ENCODE measurements at regions of chr11 and their contacts with region 1.

Region 1: GRCh38 chr11:59158206-59159068 is 13.5 kb upstream of the DTX4 start:
- DNase-seq: peak; percentile 87
- H3K4me3 ChIP-seq: no peak overlapping the region
- H3K27ac ChIP-seq: no peak overlapping the region
- H3K4me1 ChIP-seq: no peaks in the 10 kb centered on the region
- H3K27me3 ChIP-seq: no peaks in the 10 kb centered on the region
- CTCF ChIP-seq: peak; percentile 94

Region 2: GRCh38 chr11:58905721-58906477 is 252.5 kb before region 1 on chr11:
- CTCF ChIA-PET with region 1: interaction called, 4 read pairs
- POLR2A ChIA-PET with region 1: no interaction called
- intact Hi-C with region 1: loop called (anchors 5 kb)
- DNase-seq: peak; percentile 87
- H3K4me3 ChIP-seq: peak overlapping the region; percentile 44
- H3K27ac ChIP-seq: no peak overlapping the region
- H3K4me1 ChIP-seq: no peaks in the 10 kb centered on the region
- H3K27me3 ChIP-seq: peaks cover 45% of the 10 kb centered on the region
- CTCF ChIP-seq: peak; percentile 55

Region 3: DNA sequence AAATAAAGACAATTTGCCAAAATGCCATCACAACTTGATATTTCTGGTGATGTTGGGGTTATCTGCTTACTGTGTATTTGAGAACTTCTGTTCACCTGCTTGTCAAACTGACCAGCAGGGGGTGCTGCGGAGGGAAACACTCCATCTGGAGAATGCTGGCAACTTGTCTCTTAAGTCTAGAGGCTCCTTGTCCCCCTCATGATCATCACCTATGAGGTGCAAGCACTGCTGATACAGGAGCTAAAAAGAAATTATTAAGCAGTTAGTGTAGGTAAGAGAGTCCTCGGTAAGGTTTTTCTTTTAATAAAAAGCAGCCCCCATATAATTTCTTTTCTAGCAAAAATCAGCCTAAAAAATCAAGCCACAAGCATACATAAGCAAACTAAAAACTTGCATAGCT is 105.0 kb before region 1 on chr11:
- CTCF ChIA-PET with region 1: interaction called, 8 read pairs
- POLR2A ChIA-PET with region 1: no interaction called
- intact Hi-C with region 1: loop called (anchors 1 kb)
- DNase-seq: peak; percentile 77
- H3K4me3 ChIP-seq: no peak overlapping the region
- H3K27ac ChIP-seq: no peak overlapping the region
- H3K4me1 ChIP-seq: no peaks in the 10 kb centered on the region
- H3K27me3 ChIP-seq: peaks cover 23% of the 10 kb centered on the region
- CTCF ChIP-seq: peak; percentile 74

Region 4: DNA sequence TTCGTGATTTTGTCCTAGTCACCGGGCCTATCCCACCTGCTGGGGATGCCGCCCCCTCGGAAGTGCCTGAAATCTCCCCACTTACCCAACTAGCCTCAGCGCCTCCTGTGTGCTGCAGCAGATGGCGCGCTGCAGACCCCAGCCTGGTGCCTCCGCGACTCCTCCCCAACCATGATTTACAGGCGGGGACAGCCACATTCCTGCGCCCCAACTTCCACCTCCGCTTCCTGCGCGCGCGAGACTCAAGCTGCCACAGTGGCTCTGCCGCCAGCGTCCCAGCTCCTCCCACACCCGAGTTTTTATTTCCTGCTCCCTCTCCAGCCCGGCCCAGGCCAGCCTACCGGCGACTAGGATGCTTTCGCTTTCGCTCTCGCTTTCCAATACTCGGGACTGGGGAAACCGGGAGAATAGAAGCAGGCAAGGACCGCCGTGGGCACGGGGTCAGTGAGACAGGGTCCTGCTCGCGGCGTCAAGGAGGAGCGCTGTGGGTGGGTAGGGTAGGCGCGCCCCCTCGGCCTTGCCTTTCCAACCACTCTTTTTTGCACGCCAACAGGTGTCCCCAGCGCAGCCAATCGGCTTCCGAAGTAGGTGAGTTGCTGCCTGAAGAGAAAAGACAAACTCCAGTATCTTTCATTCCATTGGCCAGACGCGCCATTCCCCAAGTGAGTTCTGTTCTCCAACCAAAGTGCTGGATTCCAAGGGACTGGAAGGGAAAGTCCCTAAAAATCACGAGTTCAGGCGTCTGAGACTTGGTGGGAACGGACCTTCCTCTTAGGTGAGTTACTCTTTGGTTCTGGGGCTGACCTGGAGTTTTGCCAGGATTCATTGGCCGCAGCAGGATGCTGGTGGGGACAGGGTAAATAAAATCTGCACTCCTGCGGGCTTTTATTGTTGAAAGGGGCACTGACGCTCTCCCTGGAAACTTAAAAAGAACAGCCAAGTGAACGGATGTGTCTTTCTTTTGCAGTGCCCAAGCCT is 15.6 kb before region 1 on chr11 and contains the start of gene FAM111A:
- CTCF ChIA-PET with region 1: interaction called, 13 read pairs
- POLR2A ChIA-PET with region 1: no interaction called
- intact Hi-C with region 1: no loop called
- DNase-seq: peak; percentile 95
- H3K4me3 ChIP-seq: peak within 1 kb of the TSS; percentile 68
- H3K27ac ChIP-seq: peak within 1 kb of the TSS; percentile 80
- H3K4me1 ChIP-seq: peaks cover 22% of the 10 kb centered on the region
- H3K27me3 ChIP-seq: no peaks in the 10 kb centered on the region
- CTCF ChIP-seq: peak; percentile 68
- total RNA-seq, gene FAM111A: 47.7 and 54.8 TPM in 2 replicates

Region 5: GRCh38 chr11:59429924-59430516 is 271.6 kb after region 1 on chr11:
- CTCF ChIA-PET with region 1: interaction called, 9 read pairs
- POLR2A ChIA-PET with region 1: no interaction called
- intact Hi-C with region 1: loop called (anchors 5 kb)
- DNase-seq: peak; percentile 79
- H3K4me3 ChIP-seq: no peak overlapping the region
- H3K27ac ChIP-seq: no peak overlapping the region
- H3K4me1 ChIP-seq: peaks cover 16% of the 10 kb centered on the region
- H3K27me3 ChIP-seq: no peaks in the 10 kb centered on the region
- CTCF ChIP-seq: peak; percentile 92

Region 6: GRCh38 chr11:59463190-59463641 is 304.8 kb after region 1 on chr11:
- CTCF ChIA-PET with region 1: no interaction called
- POLR2A ChIA-PET with region 1: no interaction called
- intact Hi-C with region 1: no loop called
- DNase-seq: peak; percentile 26
- H3K4me3 ChIP-seq: no peak overlapping the region
- H3K27ac ChIP-seq: no peak overlapping the region
- H3K4me1 ChIP-seq: no peaks in the 10 kb centered on the region
- H3K27me3 ChIP-seq: no peaks in the 10 kb centered on the region
- CTCF ChIP-seq: 0 out of 2 replicates have a peak, but pooled peaks have one; percentile 31

Measured in A673 (cell line).